ENCODE measurements at regions of chr20 and their contacts with region 1.

Region 1: DNA sequence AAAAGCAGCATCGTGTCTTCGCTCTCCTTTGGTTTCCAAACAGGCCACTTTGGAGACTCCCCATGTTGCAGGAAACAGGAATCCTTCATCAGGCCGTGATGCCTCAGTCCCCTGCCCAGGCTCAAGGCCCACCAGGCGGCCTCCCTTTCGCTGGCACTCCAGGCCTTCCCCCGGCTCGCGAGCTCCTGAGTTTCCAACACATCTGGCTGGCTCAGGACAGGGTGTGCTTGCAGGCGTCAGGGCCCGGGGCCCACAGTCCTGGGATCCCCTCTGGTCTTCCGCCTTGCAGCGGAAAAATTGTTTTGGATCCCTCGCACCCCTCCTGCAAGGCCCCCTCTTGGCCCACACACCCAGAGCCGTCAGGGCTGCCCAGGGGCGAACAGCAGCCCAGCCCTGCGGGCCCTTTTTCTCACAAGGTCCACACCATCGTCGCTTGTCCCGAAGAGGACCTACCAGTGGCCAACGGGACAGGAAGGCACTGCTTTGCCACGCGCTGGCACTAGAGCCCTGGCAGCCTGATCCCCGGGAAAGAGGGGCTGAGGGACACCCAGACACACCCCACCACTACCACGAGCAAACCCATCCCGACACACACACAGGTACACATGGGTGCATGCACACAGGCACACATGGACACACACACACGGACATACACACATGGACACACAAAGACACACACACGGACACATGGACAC is 1930.9 kb upstream of the DEFB115 start:
- DNase-seq: no peak
- H3K4me3 ChIP-seq: no peak overlapping the region
- H3K4me3 Mint-ChIP-seq: peak overlapping the region; percentile 14
- H3K27ac Mint-ChIP-seq: no peak overlapping the region
- H3K4me1 ChIP-seq: no peaks in the 10 kb centered on the region
- H3K4me1 Mint-ChIP-seq: no peaks in the 10 kb centered on the region
- H3K27me3 ChIP-seq: no peaks in the 10 kb centered on the region
- H3K27me3 Mint-ChIP-seq: no peaks in the 10 kb centered on the region
- CTCF ChIP-seq: no peak

Region 2: DNA sequence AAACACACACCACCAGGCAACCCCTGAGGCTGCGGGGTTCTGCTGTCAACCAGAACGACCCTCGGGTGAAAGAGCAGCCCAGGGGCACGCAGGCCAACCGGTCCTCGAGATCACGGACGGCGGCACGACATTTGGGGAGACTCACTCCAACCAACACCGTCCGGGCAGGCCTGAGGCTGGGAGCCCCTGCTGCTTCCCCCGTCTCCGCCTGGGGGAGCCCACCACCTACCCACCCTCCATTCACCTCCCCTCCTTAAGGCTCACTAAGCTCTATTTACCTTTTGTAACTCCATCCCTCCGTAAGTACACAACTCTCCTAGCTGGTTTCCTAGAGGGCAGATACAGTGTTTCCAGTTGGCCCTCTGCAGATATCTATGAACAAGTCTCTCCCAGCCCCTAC is 959.6 kb after region 1 on chr20:
- CTCF ChIA-PET with region 1: no interaction called
- POLR2A ChIA-PET with region 1: no interaction called
- intact Hi-C with region 1: loop called (anchors 1 kb)
- DNase-seq: peak; percentile 77 to 81
- H3K4me3 ChIP-seq: no peak overlapping the region
- H3K4me3 Mint-ChIP-seq: no peak overlapping the region
- H3K27ac Mint-ChIP-seq: no peak overlapping the region
- H3K4me1 ChIP-seq: peaks cover 33% of the 10 kb centered on the region
- H3K4me1 Mint-ChIP-seq: peaks cover 35% of the 10 kb centered on the region
- H3K27me3 ChIP-seq: no peaks in the 10 kb centered on the region
- H3K27me3 Mint-ChIP-seq: no peaks in the 10 kb centered on the region
- CTCF ChIP-seq: peak; percentile 68 to 81